SK-N-SH (cell line): ENCODE measurements at regions of chr3 and their contacts with region 1.

Region 1: DNA sequence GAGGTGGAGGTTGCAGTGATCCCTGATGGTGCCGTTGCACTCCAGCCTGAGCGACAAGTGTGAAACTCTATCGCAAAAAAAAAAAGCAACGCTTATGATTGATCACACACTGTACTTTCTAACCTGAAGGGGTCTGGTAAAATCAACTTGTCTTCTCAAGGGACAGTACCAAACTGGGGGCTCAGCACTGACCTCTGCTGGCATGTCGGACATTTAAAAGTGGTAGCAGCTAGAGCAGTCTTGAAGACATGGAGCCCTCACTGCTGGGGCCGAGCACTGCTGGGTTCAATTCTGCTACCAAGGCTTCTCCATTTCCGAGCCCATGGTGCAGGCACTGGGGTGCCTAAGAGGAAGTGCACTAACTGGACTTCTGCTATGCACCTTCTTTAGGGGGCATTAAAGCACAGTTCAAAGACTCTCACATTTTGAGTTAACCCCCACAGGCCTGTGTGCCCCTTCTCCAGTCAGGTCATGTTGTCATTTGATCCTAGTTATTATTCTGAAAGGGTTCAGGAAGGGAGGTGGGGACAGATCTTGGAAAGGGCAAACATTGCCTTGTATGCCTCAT is 26.4 kb upstream of the LAMP3 start:
- DNase-seq: no peak
- H3K4me3 ChIP-seq: no peak overlapping the region
- H3K27ac ChIP-seq: no peak overlapping the region
- H3K4me1 ChIP-seq: peaks cover 0 to 12% of the 10 kb centered on the region in 2 experiments; a peak in 2 of 4 replicates
- H3K27me3 ChIP-seq: no peaks in the 10 kb centered on the region
- CTCF ChIP-seq: peak; percentile 48
- EP300 ChIP-seq: no peak
- RAD21 ChIP-seq: peak; percentile 28; the same call in 1 of the 2 replicates

Region 2: DNA sequence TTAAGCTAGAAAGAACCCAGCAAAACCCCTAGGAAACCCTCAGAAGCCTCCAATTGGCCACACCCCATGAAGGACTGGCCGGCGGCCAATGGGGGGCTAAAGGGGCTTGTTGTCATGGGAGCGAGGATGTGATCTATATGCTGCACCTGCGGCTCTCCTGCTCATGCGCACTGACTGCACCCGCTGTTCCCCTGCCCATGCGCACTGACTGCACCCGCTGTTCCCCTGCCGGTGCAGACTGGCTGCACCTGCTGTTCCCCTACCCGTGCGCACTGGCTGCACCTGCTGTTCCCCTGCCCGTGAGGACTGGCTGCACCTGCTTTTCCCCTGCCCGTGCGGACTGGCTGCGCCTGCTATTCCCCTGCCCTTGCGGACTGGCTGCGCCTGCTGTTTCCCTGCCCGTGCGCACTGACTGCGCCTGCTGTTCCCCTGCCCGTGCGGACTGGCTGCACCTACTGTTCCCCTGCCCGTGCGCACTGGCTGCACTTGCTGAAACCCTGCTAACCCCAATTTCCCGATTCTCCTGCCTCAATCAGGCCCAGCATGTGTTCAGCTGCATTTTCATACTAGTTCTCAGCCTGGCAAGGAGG is 72.9 kb before region 1 on chr3:
- CTCF ChIA-PET with region 1: interaction called, 11 read pairs
- POLR2A ChIA-PET with region 1: no interaction called
- DNase-seq: peak; percentile 85
- H3K4me3 ChIP-seq: peak overlapping the region in 1 of 2 experiments; percentile 55; a peak in 2 of 4 replicates
- H3K27ac ChIP-seq: no peak overlapping the region
- H3K4me1 ChIP-seq: peaks cover 0 to 21% of the 10 kb centered on the region in 2 experiments; a peak in 1 of 4 replicates
- H3K27me3 ChIP-seq: peaks cover 21% of the 10 kb centered on the region
- CTCF ChIP-seq: no peak
- EP300 ChIP-seq: no peak
- RAD21 ChIP-seq: no peak

Region 3: DNA sequence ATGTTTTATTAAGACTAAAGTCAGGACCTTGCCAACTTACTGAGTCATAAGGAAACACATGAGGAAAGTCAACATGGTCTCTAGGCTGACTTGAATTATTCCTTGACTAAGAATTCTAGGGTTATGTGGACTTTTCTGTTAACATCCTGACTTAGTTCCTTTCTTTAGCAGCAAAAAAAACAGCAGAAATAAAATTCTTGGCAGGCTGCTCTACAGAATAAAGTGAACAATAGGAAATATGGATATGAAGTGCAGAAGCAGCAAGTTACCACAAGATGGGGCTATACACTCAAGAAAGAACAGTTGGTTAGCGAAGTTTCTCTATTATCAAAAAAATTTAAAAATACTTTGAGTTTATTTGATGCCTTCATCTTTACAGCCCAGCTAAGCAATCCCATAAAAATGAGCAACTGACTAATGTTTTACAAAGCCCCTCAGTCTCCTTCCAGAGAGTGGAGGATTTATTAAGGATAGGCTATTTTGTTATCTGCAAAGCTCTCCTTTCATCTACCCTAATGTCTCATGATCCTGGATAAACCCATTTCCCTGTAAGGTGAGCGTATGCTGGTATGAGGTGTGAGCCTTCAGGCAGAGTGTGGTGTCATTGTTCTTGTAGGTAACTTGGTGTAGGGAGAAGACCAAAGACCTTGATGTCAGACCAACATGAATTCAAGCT is 66.6 kb before region 1 on chr3:
- CTCF ChIA-PET with region 1: interaction called, 33 read pairs
- POLR2A ChIA-PET with region 1: no interaction called
- DNase-seq: peak; percentile 63
- H3K4me3 ChIP-seq: no peak overlapping the region; a peak in 1 of 4 replicates
- H3K27ac ChIP-seq: peak overlapping the region in 1 of 2 experiments; percentile 14; a peak in 2 of 4 replicates
- H3K4me1 ChIP-seq: peaks cover 0 to 7% of the 10 kb centered on the region in 2 experiments; a peak in 1 of 4 replicates
- H3K27me3 ChIP-seq: peaks cover 3% of the 10 kb centered on the region; the same call in 1 of the 2 replicates
- CTCF ChIP-seq: peak; percentile 97
- EP300 ChIP-seq: no peak
- RAD21 ChIP-seq: peak; percentile 92

Region 4: GRCh38 chr3:183369117-183369516 is 180.1 kb after region 1 on chr3:
- CTCF ChIA-PET with region 1: interaction called, 361 read pairs
- POLR2A ChIA-PET with region 1: no interaction called
- DNase-seq: no peak
- H3K4me3 ChIP-seq: no peak overlapping the region
- H3K27ac ChIP-seq: no peak overlapping the region
- H3K4me1 ChIP-seq: 0 out of 4 replicates have a peak, but pooled peaks cover 0 to 6% of the 10 kb centered on the region in 2 experiments
- H3K27me3 ChIP-seq: no peaks in the 10 kb centered on the region
- CTCF ChIP-seq: no peak
- EP300 ChIP-seq: no peak
- RAD21 ChIP-seq: no peak

Region 5: GRCh38 chr3:183392186-183393034 is 203.4 kb after region 1 on chr3:
- CTCF ChIA-PET with region 1: interaction called, 43 read pairs
- POLR2A ChIA-PET with region 1: no interaction called
- DNase-seq: no peak
- H3K4me3 ChIP-seq: no peak overlapping the region
- H3K27ac ChIP-seq: no peak overlapping the region; a peak in 1 of 4 replicates
- H3K4me1 ChIP-seq: peaks cover 0 to 19% of the 10 kb centered on the region in 2 experiments; a peak in 2 of 4 replicates
- H3K27me3 ChIP-seq: no peaks in the 10 kb centered on the region
- CTCF ChIP-seq: no peak
- EP300 ChIP-seq: no peak
- RAD21 ChIP-seq: no peak